ENCODE measurements at regions of chr3 and their contacts with region 1.

Region 1: DNA sequence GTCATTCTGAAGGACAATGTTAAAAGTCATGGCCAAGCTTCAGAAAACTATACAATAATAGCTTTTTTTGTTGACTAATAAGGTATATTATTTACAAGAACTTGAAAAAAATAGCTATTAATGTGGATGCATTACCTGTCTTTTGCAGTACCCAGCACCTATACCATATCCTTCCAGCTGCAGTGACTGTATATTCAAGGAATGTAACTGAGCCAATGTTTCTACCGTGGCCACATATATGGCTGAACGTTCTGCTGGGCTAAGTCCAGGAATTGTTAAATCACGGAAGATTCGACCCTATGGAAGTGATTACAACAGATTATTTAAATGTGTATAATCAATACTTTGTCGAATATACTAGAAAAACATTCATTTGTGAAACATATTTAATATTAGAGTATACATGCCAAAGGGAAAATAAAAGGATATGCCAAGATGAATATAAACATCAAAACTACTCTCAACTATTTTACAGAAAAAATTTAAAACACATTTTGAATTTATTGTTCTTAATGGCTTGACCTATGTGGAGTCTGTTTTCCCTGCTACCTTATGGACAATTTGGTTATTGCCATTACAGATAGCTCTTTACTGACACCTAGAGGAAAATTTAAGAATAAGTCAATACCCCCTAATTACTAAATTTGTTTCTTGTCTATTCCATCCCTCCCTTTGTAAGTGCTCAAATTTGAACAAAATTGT is 17.6 kb downstream of the ACAD11 start:
- DNase-seq: peak; percentile 56
- CTCF ChIP-seq: peak; percentile 38

Region 2: DNA sequence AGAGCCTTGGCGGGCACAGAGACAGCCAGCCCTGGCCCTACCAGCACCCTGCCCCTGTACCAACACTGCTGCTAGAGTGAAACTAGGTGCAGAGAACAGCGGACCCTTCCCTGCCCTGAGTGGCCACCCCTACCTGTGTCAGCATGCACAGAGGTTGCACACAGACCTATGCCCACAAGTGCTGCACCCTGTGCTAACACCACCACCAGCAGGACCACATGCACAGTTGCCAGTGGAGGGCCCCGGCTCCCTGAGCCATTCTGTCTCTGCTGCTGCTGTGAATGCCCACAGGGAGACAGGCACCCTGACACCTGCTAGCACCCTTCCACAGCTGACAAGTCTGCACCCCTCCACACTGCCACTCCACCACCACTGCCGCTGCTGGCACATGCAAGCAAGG is 1483.6 kb before region 1 on chr3:
- CTCF ChIA-PET with region 1: no interaction called
- POLR2A ChIA-PET with region 1: no interaction called
- DNase-seq: no peak
- CTCF ChIP-seq: no peak

Region 3: DNA sequence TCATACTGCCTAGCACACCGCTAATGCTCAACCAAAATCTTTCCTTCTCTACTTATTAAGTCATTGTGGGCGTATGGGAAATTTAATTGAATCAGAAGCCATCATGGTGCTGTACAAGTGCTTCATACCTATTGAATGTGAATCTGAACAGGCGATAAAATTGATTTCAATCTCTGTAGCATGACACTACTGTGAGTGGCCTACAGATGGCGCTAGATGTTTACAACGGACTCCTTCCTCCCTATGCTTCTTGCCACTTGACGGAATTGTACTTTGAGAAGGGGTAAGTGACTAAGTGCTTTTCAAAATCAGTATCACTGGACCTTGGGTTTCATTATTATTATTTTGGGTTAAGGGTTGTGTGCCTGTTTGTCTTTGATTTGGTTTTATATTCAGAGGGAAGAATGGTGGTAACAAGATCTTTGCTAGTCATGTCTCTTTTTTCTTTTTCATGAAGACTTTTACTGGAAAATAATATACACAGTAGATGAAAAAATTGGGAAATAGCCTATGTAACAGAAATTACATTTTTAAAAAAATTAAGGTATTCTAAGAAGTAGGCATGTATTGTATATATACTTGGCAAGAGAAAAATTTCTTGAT is 289.3 kb before region 1 on chr3:
- CTCF ChIA-PET with region 1: interaction called, 13 read pairs
- POLR2A ChIA-PET with region 1: no interaction called
- DNase-seq: peak; percentile 67
- CTCF ChIP-seq: peak; percentile 77

Region 4: DNA sequence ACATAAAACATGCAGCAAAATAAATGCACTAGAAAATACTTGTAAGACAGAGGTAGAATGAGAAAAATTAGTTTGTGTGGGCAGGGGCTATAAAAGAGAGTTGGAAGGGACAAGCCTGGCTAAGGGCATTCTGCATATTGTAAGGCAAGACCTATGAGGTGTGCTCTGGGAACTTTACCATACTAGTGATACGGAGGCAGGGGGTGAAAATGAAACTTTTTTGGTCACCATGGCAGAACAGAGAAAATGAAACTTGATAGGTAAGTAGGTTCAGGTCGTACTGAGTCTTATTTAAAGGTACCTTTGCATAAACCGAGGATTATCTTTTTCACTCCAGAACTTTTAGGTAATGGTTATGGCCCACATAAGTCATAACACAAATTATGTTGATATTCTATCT is 119.6 kb before region 1 on chr3:
- CTCF ChIA-PET with region 1: interaction called, 12 read pairs
- POLR2A ChIA-PET with region 1: no interaction called
- DNase-seq: peak; percentile 31
- CTCF ChIP-seq: no peak

Region 5: DNA sequence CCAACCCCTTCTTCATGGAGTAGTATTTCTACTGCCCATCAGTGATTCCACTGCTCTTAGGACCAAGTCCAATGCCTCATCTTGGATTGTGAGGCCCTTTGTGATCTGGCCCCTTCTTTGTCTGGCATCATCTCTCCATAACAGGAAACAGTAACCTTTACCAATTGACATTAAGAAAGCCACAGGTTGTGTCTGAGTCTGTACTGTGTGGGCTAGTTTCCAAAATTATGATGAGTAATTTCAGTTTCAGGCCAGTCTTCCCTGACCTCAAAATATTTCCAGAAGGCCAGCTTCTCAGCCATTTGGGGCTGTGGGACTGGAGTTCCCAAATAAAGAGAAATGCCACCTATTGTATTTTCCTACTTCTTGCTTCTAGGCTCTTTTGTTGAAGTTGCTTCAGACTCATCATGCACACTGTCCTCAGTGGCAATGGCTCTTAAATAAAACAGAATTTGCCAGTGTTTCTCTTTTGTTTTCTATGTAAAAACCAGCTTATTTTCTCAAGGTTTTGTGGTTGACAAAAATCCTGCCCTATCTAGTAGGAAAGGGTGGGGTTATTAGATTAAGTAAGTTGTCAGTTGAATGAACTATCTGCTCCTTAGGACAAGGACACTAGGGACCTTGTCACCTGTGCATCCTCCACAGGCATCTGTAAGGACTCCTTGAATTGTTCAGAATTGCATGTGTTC is 92.0 kb before region 1 on chr3:
- CTCF ChIA-PET with region 1: interaction called, 15 read pairs
- POLR2A ChIA-PET with region 1: no interaction called
- DNase-seq: peak; percentile 33
- CTCF ChIP-seq: no peak

Region 6: GRCh38 chr3:132629928-132630327 is 12.1 kb before region 1 on chr3:
- CTCF ChIA-PET with region 1: interaction called, 28 read pairs
- POLR2A ChIA-PET with region 1: no interaction called
- DNase-seq: no peak
- CTCF ChIP-seq: no peak

Region 7: DNA sequence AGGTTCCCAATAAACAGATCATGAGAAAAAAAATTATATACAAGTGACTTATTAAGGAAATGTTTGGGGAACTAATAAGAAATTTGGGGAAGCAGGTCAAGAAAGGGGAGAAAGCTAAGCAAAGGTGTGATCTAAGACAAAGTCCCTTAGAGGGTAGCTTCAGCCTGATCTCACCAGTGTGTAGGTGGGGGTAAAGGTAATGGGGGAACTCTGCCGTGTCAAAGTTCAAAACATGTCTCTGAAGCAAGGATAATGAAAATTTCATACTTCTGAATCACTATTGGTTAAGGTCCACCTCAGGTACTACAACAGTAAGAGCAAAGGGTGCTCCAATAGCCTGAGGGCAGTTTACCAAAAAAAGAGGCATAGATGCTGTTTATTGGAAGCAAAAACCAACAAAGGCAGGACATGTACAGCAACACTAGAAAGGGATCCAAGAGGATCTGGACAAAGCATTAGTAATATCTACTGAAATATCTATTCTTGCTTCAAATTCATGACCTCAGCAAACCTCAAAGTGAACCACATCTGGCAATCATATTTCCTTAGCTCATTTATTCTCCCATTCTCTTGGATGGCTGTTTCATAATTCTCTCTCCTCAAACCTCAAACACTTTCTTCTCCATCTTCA is 10.8 kb after region 1 on chr3:
- CTCF ChIA-PET with region 1: interaction called, 29 read pairs
- POLR2A ChIA-PET with region 1: no interaction called
- DNase-seq: no peak
- CTCF ChIP-seq: no peak

Region 8: GRCh38 chr3:132659365-132660051 is 17.5 kb after region 1 on chr3 and contains the start of gene ACAD11:
- CTCF ChIA-PET with region 1: interaction called, 29 read pairs
- POLR2A ChIA-PET with region 1: no interaction called
- DNase-seq: peak; percentile 66
- CTCF ChIP-seq: peak; percentile 65

Region 9: DNA sequence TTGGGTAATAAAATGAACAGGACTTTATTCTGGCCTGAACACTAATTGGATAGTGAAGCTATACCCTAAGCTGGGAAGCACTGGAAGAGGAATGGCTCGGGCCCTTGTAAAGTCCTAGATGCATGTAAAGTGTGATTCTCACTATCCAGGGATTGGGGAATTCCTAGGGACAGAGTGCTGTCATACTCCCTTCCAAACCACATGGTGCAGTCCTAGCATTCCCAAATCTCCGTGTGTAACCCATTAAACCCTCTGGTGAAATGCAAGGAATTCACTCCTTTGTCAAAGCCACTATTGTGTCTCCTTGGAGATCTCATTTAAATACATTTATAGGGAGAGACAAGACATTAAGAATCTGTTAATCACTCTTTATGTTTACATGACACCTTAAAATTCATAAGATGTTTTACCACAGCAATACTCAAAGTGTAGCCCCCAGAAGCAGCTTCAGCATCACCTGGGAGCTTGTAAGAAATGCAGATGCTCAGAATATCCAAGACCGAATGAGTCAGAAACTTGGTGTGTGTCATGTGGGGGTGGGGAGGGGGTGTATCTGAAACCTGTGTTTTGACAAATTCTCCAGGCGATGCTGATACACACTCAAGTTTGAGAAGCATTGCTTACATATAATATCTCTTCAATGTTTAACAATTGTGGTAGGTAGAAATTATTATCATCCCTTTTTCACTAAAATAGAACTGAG is 202.0 kb after region 1 on chr3:
- CTCF ChIA-PET with region 1: no interaction called
- POLR2A ChIA-PET with region 1: no interaction called
- DNase-seq: no peak
- CTCF ChIP-seq: no peak

Measured in GM10248 (cell line).